PC-9 (cell line): ENCODE measurements at regions of chr11 and their contacts with region 1.

Region 1: GRCh38 chr11:3217676-3218482 is 734 bp downstream of the MRGPRG start:
- DNase-seq: no peak
- H3K4me3 ChIP-seq: no peak overlapping the region
- H3K27ac ChIP-seq: no peak overlapping the region
- H3K4me1 ChIP-seq: no peaks in the 10 kb centered on the region
- H3K27me3 ChIP-seq: peaks cover 19% of the 10 kb centered on the region
- CTCF ChIP-seq: no peak

Region 2: DNA sequence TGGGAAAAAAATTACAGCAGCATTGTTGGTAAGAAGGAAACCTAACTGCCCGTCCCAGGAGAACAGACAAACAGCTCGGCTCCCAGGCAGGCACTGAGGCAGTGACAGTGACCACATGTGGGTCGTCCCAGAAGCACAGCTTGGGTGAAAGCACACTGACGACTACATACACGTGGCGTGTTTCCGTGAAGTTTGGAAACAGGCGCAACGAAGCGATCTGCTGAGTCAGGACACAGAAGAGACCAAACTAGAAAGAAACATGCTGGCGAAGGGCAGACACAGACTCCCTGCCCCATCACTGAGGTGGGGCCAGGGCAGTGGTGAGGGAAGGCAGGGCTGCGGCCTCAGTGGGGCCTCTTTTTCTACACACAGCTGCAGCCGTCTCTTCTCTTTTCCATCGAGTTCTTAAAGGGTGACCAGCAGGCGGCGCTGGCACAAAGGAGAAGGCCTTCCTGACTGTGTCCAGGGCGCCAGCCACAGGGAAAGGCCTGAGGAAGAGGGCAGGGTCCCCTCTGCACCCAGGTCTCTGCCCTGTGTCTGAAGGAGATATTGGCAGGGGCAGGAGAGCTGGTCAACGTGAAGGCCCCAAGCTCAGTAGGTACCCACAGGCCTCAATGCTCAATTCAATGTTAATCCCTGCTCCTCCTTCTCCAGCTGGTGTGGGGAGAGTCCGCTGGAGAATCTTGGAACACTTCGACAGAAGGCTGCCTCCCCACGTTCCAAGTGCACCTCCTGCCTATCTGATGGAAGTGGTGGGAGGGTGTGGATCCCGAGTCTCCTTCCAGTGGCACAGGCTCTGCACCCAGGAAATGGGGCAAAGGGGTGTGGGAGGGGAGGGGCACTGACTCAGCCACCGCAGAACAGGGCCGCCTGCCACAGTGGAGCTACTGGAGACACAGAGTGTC is 180.6 kb before region 1 on chr11:
- CTCF ChIA-PET with region 1: no interaction called
- POLR2A ChIA-PET with region 1: no interaction called
- intact Hi-C with region 1: loop called (anchors 1 kb)
- DNase-seq: peak in 1 of 2 experiments; percentile 61
- H3K4me3 ChIP-seq: no peak overlapping the region
- H3K27ac ChIP-seq: no peak overlapping the region
- H3K4me1 ChIP-seq: no peaks in the 10 kb centered on the region
- H3K27me3 ChIP-seq: no peaks in the 10 kb centered on the region
- CTCF ChIP-seq: peak; percentile 73

Region 3: GRCh38 chr11:3231855-3232744 is 14.2 kb after region 1 on chr11 and contains the start of gene MRGPRE:
- CTCF ChIA-PET with region 1: no interaction called
- POLR2A ChIA-PET with region 1: no interaction called
- intact Hi-C with region 1: no loop called
- DNase-seq: peak in 1 of 2 experiments; percentile 12
- H3K4me3 ChIP-seq: no peak within 1 kb of the TSS
- H3K27ac ChIP-seq: no peak within 1 kb of the TSS
- H3K4me1 ChIP-seq: no peaks in the 10 kb centered on the region
- H3K27me3 ChIP-seq: peaks cover 36% of the 10 kb centered on the region
- CTCF ChIP-seq: no peak
- total RNA-seq, gene MRGPRE: not detected in 2 replicates